CD4-positive, alpha-beta memory T cell (primary cell): ENCODE measurements at regions of chr1 and their contacts with region 1.

Region 1: GRCh38 chr1:180745098-180745497 is 113.3 kb downstream of the XPR1 start:
- DNase-seq: no peak
- H3K4me3 ChIP-seq: no peak overlapping the region
- H3K4me3 Mint-ChIP-seq: no peak overlapping the region
- H3K27ac ChIP-seq: no peak overlapping the region
- H3K27ac Mint-ChIP-seq: peak overlapping the region in 1 of 7 donors; percentile 48
- H3K4me1 ChIP-seq: no peaks in the 10 kb centered on the region
- H3K4me1 Mint-ChIP-seq: peaks cover 0 to 15% (median 2%) of the 10 kb centered on the region in 4 donors
- H3K27me3 ChIP-seq: no peaks in the 10 kb centered on the region
- H3K27me3 Mint-ChIP-seq: no peaks in the 10 kb centered on the region

Region 2: GRCh38 chr1:180598333-180598974 is 146.6 kb before region 1 on chr1:
- CTCF ChIA-PET with region 1: no interaction called
- POLR2A ChIA-PET with region 1: no interaction called
- intact Hi-C with region 1: no loop called
- DNase-seq: no peak
- H3K4me3 ChIP-seq: no peak overlapping the region
- H3K4me3 Mint-ChIP-seq: no peak overlapping the region
- H3K27ac ChIP-seq: no peak overlapping the region
- H3K27ac Mint-ChIP-seq: no peak overlapping the region
- H3K4me1 ChIP-seq: no peaks in the 10 kb centered on the region
- H3K4me1 Mint-ChIP-seq: no peaks in the 10 kb centered on the region
- H3K27me3 ChIP-seq: no peaks in the 10 kb centered on the region
- H3K27me3 Mint-ChIP-seq: peaks cover 5 to 12% of the 10 kb centered on the region in 2 donors

Region 3: DNA sequence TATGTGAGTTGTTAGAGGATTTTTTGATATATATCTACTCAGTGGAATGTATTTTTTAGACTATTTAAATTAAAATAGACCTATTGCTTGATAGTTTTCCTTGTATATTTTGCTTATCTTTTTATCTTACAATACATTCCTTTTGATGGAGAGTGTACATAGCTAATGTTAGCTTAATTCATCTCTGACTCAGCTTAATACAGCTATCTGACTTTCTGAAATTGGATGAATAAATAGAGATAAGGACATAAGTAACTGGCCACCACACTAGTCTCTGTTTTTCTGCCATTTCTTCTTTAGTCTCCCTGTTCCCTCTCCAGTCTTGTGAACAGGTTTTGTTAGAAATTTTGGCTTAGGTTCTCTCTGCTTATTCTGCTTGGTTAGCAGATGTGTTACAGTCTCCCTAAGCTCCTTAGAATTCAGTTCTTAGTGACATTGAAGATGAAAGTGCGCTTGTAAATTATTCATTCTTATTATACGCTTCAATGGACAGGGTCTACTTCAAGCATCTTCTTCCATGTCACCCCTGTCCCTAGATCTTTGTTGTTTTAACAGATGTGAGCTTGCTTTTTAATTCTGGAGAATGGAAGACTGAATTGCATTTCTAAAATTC is 53.7 kb before region 1 on chr1:
- CTCF ChIA-PET with region 1: no interaction called
- POLR2A ChIA-PET with region 1: no interaction called
- intact Hi-C with region 1: loop called (anchors 10 kb)
- DNase-seq: no peak
- H3K4me3 ChIP-seq: no peak overlapping the region
- H3K4me3 Mint-ChIP-seq: no peak overlapping the region
- H3K27ac ChIP-seq: no peak overlapping the region
- H3K27ac Mint-ChIP-seq: no peak overlapping the region
- H3K4me1 ChIP-seq: no peaks in the 10 kb centered on the region
- H3K4me1 Mint-ChIP-seq: peaks cover 16 to 27% (median 23%) of the 10 kb centered on the region in 4 donors
- H3K27me3 ChIP-seq: no peaks in the 10 kb centered on the region
- H3K27me3 Mint-ChIP-seq: no peaks in the 10 kb centered on the region